IMR-90 (cell line): ENCODE measurements at regions of chr5 and their contacts with region 1.

Region 1: DNA sequence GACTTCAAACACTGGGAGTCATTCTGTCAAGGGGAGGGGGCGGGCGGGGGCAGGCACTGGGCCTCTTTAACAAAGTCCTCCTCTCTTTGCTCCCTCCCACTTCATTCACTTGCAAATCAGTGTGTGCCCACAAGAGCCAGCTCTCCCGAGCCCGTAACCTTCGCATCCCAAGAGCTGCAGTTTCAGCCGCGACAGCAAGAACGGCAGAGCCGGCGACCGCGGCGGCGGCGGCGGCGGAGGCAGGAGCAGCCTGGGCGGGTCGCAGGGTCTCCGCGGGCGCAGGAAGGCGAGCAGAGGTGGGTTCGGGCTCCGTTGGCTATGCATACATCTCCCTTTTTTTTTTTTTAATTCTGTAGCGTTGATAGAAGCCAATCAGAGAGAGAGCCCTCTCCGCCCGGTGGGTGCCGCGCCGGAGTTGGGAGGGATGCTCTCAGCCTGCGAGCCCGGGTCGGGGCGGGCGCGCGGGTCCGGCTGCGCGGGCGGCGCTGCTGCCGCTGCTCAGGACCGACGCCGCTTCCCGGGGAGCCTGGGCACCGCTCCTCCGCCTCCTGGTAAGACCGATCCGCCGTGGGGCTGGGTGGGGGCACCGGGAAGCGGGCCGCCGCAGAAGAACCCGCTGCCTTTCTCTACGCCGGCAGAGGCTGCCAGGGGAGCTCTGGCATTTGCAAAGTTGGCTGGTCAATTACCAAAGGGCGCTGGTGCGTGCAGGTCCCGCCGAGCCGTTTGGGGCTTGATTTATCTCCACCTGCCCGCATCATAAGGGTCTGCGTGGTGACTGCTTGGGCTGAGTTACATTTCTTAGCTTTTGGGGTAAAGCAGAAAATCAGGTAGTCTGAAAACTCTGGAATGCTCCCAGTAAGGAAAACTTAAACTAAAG is at the start of gene CDH6:
- DNase-seq: peak; percentile 75
- ATAC-seq: peak; percentile 67
- H3K4me3 ChIP-seq: peak within 1 kb of the TSS; percentile 88
- H3K27ac ChIP-seq: peak within 1 kb of the TSS; percentile 67
- H3K4me1 ChIP-seq: peaks cover 5% of the 10 kb centered on the region
- H3K27me3 ChIP-seq: no peaks in the 10 kb centered on the region
- CTCF ChIP-seq: no peak
- POLR2A ChIP-seq: peak; percentile 76
- RAD21 ChIP-seq: no peak
- total RNA-seq, gene CDH6: 211 and 232 TPM in 2 replicates

Region 2: GRCh38 chr5:30804739-30805505 is 388.9 kb before region 1 on chr5:
- CTCF ChIA-PET with region 1: interaction called, 4 read pairs
- POLR2A ChIA-PET with region 1: no interaction called
- dilution Hi-C with region 1: no loop called
- in situ Hi-C with region 1: no loop called
- intact Hi-C with region 1: loop called (anchors 2 kb)
- DNase-seq: peak; percentile 62
- ATAC-seq: peak; percentile 80
- H3K4me3 ChIP-seq: no peak overlapping the region
- H3K27ac ChIP-seq: no peak overlapping the region
- H3K4me1 ChIP-seq: no peaks in the 10 kb centered on the region; the same call in 1 of the 2 replicates
- H3K27me3 ChIP-seq: no peaks in the 10 kb centered on the region
- CTCF ChIP-seq: peak; percentile 56
- POLR2A ChIP-seq: no peak
- RAD21 ChIP-seq: peak; percentile 69

Region 3: DNA sequence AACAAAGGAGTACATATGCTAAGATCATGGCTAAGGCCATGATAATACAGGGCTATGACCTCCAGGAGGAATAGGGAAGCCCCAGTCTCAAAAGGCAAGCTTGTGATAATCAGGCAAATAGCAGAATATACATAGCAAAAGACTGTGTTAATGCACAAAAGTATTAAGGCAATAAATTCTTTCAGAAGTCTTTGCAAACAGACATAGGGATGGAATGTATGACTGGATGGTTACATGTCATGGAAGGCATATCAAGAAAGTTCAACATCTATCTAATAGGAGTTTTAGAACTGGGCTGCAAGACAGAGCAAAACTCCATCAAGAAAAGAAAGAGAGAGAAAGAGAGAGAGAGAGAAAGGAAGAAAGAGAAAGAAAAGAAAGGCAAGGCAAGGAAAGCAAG is 264.9 kb before region 1 on chr5:
- CTCF ChIA-PET with region 1: interaction called, 3 read pairs
- POLR2A ChIA-PET with region 1: no interaction called
- dilution Hi-C with region 1: no loop called
- in situ Hi-C with region 1: no loop called
- intact Hi-C with region 1: loop called (anchors 10 kb)
- DNase-seq: peak; percentile 69
- ATAC-seq: peak; percentile 73
- H3K4me3 ChIP-seq: no peak overlapping the region
- H3K27ac ChIP-seq: no peak overlapping the region
- H3K4me1 ChIP-seq: peaks cover 9% of the 10 kb centered on the region
- H3K27me3 ChIP-seq: no peaks in the 10 kb centered on the region
- CTCF ChIP-seq: no peak
- POLR2A ChIP-seq: no peak
- RAD21 ChIP-seq: no peak

Region 4: GRCh38 chr5:31106691-31107546 is 86.9 kb before region 1 on chr5:
- CTCF ChIA-PET with region 1: no interaction called
- POLR2A ChIA-PET with region 1: no interaction called
- dilution Hi-C with region 1: no loop called
- in situ Hi-C with region 1: no loop called
- intact Hi-C with region 1: loop called (anchors 2 kb)
- DNase-seq: peak; percentile 90
- ATAC-seq: peak; percentile 85
- H3K4me3 ChIP-seq: no peak overlapping the region
- H3K27ac ChIP-seq: peak overlapping the region; percentile 31; the same call in 1 of the 2 replicates
- H3K4me1 ChIP-seq: peaks cover 11% of the 10 kb centered on the region
- H3K27me3 ChIP-seq: no peaks in the 10 kb centered on the region
- CTCF ChIP-seq: no peak
- POLR2A ChIP-seq: no peak
- RAD21 ChIP-seq: no peak

Region 5: DNA sequence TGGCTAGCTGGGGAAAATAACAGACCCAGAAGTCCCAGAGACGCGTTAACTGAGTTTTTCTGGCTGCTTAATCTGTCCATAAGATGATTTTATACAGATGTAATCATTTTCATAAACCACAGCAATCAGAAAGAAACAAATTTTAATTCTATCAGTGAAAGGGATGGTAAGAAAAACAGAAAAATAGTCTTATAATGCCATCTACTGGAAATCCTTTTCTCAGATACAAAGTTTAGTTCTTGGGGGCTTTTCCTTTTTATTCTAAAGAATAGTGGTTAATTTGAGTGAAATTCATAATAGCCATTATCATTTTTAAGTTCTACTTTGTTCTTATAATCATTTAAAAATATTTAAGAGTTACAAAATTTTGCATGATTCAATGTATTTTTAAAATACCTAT is 293.7 kb after region 1 on chr5:
- CTCF ChIA-PET with region 1: no interaction called
- POLR2A ChIA-PET with region 1: no interaction called
- dilution Hi-C with region 1: no loop called
- in situ Hi-C with region 1: no loop called
- intact Hi-C with region 1: loop called (anchors 2 kb)
- DNase-seq: peak; percentile 11
- ATAC-seq: no peak
- H3K4me3 ChIP-seq: no peak overlapping the region
- H3K27ac ChIP-seq: no peak overlapping the region
- H3K4me1 ChIP-seq: peaks cover 4% of the 10 kb centered on the region; the same call in 1 of the 2 replicates
- H3K27me3 ChIP-seq: no peaks in the 10 kb centered on the region
- CTCF ChIP-seq: peak; percentile 47
- POLR2A ChIP-seq: no peak
- RAD21 ChIP-seq: peak; percentile 53